Left lung (tissue), 14 donors: ENCODE measurements at regions of chr17 and their contacts with region 1.

Region 1: GRCh38 chr17:47884905-47885733 is 10.9 kb upstream of the SP2 start:
- DNase-seq: no peak
- ATAC-seq: no peak
- H3K4me3 ChIP-seq: no peak overlapping the region
- H3K27ac ChIP-seq: no peak overlapping the region
- H3K4me1 ChIP-seq: peaks cover 0 to 20% of the 10 kb centered on the region in 2 donors
- H3K27me3 ChIP-seq: no peaks in the 10 kb centered on the region
- CTCF ChIP-seq: no peak

Region 2: GRCh38 chr17:47841604-47842291 is 43.4 kb before region 1 on chr17:
- intact Hi-C with region 1: loop called in 1 of 2 experiments (anchors 2 kb)
- DNase-seq: no peak
- ATAC-seq: no peak
- H3K4me3 ChIP-seq: no peak overlapping the region
- H3K27ac ChIP-seq: peak overlapping the region in 1 of 2 donors; percentile 67
- H3K4me1 ChIP-seq: peaks cover 8 to 55% of the 10 kb centered on the region in 2 donors
- H3K27me3 ChIP-seq: peaks cover 7 to 26% of the 10 kb centered on the region in 2 donors
- CTCF ChIP-seq: no peak